ENCODE measurements at regions of chr11 and their contacts with region 1.

Region 1: GRCh38 chr11:1694064-1694845 is 2.7 kb upstream of the KRTAP5-6 start:
- DNase-seq: peak; percentile 74 to 88
- H3K4me3 ChIP-seq: peak overlapping the region in 1 of 2 donors; percentile 48
- H3K27ac ChIP-seq: peak overlapping the region; percentile 35 to 57
- H3K4me1 ChIP-seq: peaks cover 0 to 19% (median 10%) of the 10 kb centered on the region in 4 donors
- H3K27me3 ChIP-seq: peaks cover 0 to 8% of the 10 kb centered on the region in 2 donors
- CTCF ChIP-seq: peak; percentile 94 to 97

Region 2: GRCh38 chr11:1652771-1653540 is 41.3 kb before region 1 on chr11:
- intact Hi-C with region 1: loop called (anchors 5 kb)
- DNase-seq: peak; percentile 71 to 78
- H3K4me3 ChIP-seq: no peak overlapping the region
- H3K27ac ChIP-seq: no peak overlapping the region
- H3K4me1 ChIP-seq: peaks cover 0 to 8% (median 4%) of the 10 kb centered on the region in 4 donors
- H3K27me3 ChIP-seq: peaks cover 0 to 39% of the 10 kb centered on the region in 2 donors
- CTCF ChIP-seq: peak; percentile 95 to 97

Region 3: GRCh38 chr11:1772270-1773130 is 78.2 kb after region 1 on chr11:
- intact Hi-C with region 1: loop called (anchors 10 kb)
- DNase-seq: peak in 1 of 2 donors; percentile 85
- H3K4me3 ChIP-seq: peak overlapping the region in 1 of 2 donors; percentile 8
- H3K27ac ChIP-seq: peak overlapping the region in 1 of 2 donors; percentile 40
- H3K4me1 ChIP-seq: peaks cover 0 to 17% (median 9%) of the 10 kb centered on the region in 4 donors
- H3K27me3 ChIP-seq: no peaks in the 10 kb centered on the region
- CTCF ChIP-seq: no peak

Region 4: DNA sequence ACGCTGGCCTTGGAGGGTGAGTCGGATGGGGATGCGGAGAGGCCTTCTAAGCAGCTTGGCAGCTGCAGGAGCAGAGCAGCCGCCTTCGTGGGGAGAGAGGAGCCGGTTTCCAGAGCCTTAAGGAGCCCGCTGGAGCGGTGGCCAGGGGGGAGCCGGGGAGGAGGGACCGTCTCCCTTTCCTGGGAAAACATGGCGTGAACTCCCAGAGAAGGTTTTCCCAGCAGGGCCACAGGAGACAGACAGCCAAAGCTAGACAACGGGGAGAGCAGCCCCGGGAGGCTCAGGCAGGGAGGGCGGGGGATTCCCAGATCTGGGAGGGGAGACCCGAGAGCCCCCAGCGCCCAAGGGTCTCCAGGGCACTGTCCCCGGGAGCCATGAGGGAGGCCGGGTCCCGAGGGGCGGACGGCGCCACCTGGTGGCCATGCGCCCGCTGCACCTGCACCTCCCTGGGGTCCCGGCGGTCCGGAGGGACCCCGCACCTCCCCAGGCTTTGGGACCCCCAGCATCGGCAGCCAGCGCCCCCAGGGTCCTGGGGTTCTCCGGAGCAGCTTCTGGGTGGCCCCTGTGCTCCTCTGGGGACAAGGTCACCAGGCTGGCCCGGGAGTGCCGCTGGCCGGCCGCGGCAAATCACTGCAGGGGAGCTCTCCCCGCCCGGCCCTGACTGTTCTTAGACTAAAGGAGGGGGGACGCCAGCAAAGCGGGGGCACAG is 138.1 kb after region 1 on chr11:
- intact Hi-C with region 1: loop called (anchors 2 kb)
- DNase-seq: no peak
- H3K4me3 ChIP-seq: peak overlapping the region in 1 of 2 donors; percentile 36
- H3K27ac ChIP-seq: peak overlapping the region; percentile 85 to 88
- H3K4me1 ChIP-seq: peaks cover 0 to 70% (median 56%) of the 10 kb centered on the region in 4 donors
- H3K27me3 ChIP-seq: peaks cover 0 to 5% of the 10 kb centered on the region in 2 donors
- CTCF ChIP-seq: peak; percentile 98 to 99

Measured in tibial artery (tissue), 4 donors.